B cell (primary cell): ENCODE measurements at regions of chr5 and their contacts with region 1.

Region 1: GRCh38 chr5:72307968-72308852 is 11.8 kb downstream of the MRPS27 start:
- DNase-seq: peak; percentile 98
- ATAC-seq: peak; percentile 93
- H3K4me3 ChIP-seq: peak overlapping the region; percentile 77 to 93 (median 86)
- H3K4me3 Mint-ChIP-seq: peak overlapping the region; percentile 96
- H3K27ac ChIP-seq: peak overlapping the region; percentile 95 to 96
- H3K27ac Mint-ChIP-seq: peak overlapping the region; percentile 99
- H3K4me1 ChIP-seq: peaks cover 12 to 29% of the 10 kb centered on the region in 2 donors
- H3K4me1 Mint-ChIP-seq: peaks cover 38% of the 10 kb centered on the region
- H3K27me3 ChIP-seq: no peaks in the 10 kb centered on the region
- H3K27me3 Mint-ChIP-seq: no peaks in the 10 kb centered on the region
- CTCF ChIP-seq: peak; percentile 89

Region 2: DNA sequence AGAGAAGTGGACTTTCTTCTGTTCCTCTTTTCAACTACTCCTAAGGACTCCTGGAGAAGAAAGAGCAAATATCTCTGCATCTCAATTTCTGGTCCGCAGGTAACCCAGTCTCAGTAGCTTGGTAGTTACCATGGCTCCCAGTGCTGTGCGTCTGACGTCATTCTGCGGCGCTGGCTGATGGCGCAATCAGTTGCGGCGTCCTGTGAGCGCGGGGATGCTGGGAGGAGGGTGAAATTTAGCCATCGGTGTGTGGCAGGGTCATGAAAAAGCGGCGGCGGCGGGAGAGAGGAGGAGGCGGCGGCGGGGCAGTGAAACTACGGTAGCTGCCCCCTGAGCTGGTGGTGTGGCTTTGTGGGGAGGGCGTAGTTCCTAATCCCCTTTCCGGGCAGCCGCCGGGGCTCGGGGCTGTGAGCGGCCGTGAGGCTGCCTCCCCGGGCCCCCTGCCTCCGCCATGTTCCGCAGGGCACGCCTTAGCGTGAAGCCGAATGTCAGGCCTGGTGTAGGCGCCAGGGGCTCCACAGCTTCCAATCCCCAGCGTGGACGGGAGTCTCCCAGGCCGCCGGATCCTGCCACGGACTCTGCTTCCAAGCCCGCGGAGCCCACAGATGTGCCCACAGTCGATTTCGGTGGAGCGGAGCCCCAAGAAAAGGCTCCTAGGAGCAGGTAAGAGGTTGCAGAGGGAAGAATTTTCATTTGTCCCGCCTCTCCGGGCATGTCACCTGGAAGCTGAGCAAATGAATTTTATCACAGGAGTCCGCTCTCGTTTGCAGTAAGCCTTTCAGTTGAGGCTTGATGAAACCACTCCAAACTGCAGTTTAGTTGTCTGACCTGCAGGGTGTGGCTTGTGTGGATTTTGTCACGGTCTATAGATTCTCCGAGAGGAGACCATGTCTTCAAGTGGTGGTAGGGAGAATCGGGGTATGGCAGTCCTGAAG is 852.5 kb before region 1 on chr5 and contains the start of gene BDP1:
- CTCF ChIA-PET with region 1: no interaction called
- POLR2A ChIA-PET with region 1: no interaction called
- intact Hi-C with region 1: loop called (anchors 10 kb)
- DNase-seq: peak; percentile 97
- ATAC-seq: peak; percentile 86
- H3K4me3 ChIP-seq: peak within 1 kb of the TSS; percentile 71 to 99 (median 90)
- H3K4me3 Mint-ChIP-seq: peak within 1 kb of the TSS; percentile 94
- H3K27ac ChIP-seq: peak within 1 kb of the TSS; percentile 87 to 92
- H3K27ac Mint-ChIP-seq: peak within 1 kb of the TSS; percentile 97
- H3K4me1 ChIP-seq: peaks cover 17% of the 10 kb centered on the region in 2 donors
- H3K4me1 Mint-ChIP-seq: peaks cover 24% of the 10 kb centered on the region
- H3K27me3 ChIP-seq: peaks cover 0 to 7% (median 5%) of the 10 kb centered on the region in 4 experiments
- H3K27me3 Mint-ChIP-seq: peaks cover 7% of the 10 kb centered on the region
- CTCF ChIP-seq: peak; percentile 68
- total RNA-seq, gene BDP1: 59.4 and 63.9 TPM in 2 replicates

Region 3: GRCh38 chr5:71782771-71783770 is 525.1 kb before region 1 on chr5:
- CTCF ChIA-PET with region 1: no interaction called
- POLR2A ChIA-PET with region 1: no interaction called
- intact Hi-C with region 1: loop called (anchors 2 kb)
- DNase-seq: peak; percentile 45
- ATAC-seq: peak; percentile 65
- H3K4me3 ChIP-seq: peak overlapping the region in 2 of 5 experiments; percentile 17 to 27
- H3K4me3 Mint-ChIP-seq: peak overlapping the region; percentile 70
- H3K27ac ChIP-seq: peak overlapping the region in 1 of 2 donors; percentile 49
- H3K27ac Mint-ChIP-seq: no peak overlapping the region
- H3K4me1 ChIP-seq: peaks cover 13 to 15% of the 10 kb centered on the region in 2 donors
- H3K4me1 Mint-ChIP-seq: peaks cover 20% of the 10 kb centered on the region
- H3K27me3 ChIP-seq: peaks cover 0 to 3% (median under 1%) of the 10 kb centered on the region in 4 experiments
- H3K27me3 Mint-ChIP-seq: peaks cover 18% of the 10 kb centered on the region
- CTCF ChIP-seq: peak; percentile 39

Region 4: GRCh38 chr5:72268753-72269410 is 39.3 kb before region 1 on chr5:
- CTCF ChIA-PET with region 1: interaction called, 4 read pairs
- POLR2A ChIA-PET with region 1: no interaction called
- intact Hi-C with region 1: loop called (anchors 5 kb)
- DNase-seq: peak; percentile 52
- ATAC-seq: peak; percentile 41
- H3K4me3 ChIP-seq: no peak overlapping the region
- H3K4me3 Mint-ChIP-seq: no peak overlapping the region
- H3K27ac ChIP-seq: no peak overlapping the region
- H3K27ac Mint-ChIP-seq: no peak overlapping the region
- H3K4me1 ChIP-seq: no peaks in the 10 kb centered on the region
- H3K4me1 Mint-ChIP-seq: peaks cover 9% of the 10 kb centered on the region
- H3K27me3 ChIP-seq: no peaks in the 10 kb centered on the region
- H3K27me3 Mint-ChIP-seq: no peaks in the 10 kb centered on the region
- CTCF ChIP-seq: peak; percentile 77

Region 5: GRCh38 chr5:72319976-72320752 is 12.0 kb after region 1 on chr5 and contains the starts of genes MRPS27 and PTCD2:
- CTCF ChIA-PET with region 1: interaction called, 52 read pairs
- POLR2A ChIA-PET with region 1: interaction called, 24 read pairs
- intact Hi-C with region 1: loop called (anchors 1 kb)
- DNase-seq: peak; percentile 97
- ATAC-seq: peak; percentile 99
- H3K4me3 ChIP-seq: peak within 1 kb of the TSS; percentile 61 to 98 (median 81)
- H3K4me3 Mint-ChIP-seq: peak within 1 kb of the TSS; percentile 91
- H3K27ac ChIP-seq: peak within 1 kb of the TSS; percentile 47 to 60
- H3K27ac Mint-ChIP-seq: peak within 1 kb of the TSS; percentile 95
- H3K4me1 ChIP-seq: peaks cover 8 to 13% of the 10 kb centered on the region in 2 donors
- H3K4me1 Mint-ChIP-seq: peaks cover 29% of the 10 kb centered on the region
- H3K27me3 ChIP-seq: no peaks in the 10 kb centered on the region
- H3K27me3 Mint-ChIP-seq: no peaks in the 10 kb centered on the region
- CTCF ChIP-seq: no peak
- total RNA-seq, gene MRPS27: 52.8 and 58.3 TPM in 2 replicates
- total RNA-seq, gene PTCD2: 10.1 and 10.5 TPM in 2 replicates